ENCODE measurements at regions of chr7 and their contacts with region 1.

Region 1: DNA sequence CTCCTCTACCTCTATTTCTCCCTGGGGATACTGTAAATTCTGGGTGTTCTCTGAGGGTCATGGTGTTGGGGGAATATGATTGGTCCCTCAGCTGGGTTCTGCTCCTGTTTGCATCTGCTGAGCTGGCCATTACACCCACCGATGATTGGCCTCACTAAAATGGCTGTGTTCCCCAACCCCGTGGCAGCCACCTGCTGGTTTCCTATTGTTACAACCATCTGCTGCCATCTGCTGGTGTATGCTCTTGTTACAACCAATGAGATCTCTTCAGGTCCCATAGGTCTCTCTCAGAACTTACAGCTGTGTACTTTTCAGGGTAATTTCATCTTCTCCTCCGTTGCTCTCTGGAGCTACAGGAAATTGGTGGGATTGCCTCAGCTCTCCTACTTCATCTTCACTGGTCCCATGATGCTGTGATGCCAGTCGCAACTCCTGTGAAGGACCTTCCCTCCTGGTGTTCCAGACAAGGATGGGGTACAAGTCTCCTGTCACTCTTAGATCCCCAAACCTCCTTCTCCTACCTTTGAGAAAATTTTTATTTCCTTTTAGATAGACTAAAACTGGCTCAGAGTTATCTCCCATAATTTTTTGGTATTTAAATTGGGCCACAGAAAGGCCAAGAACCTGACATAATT is 303.5 kb upstream of the SMIM30 start:
- DNase-seq: peak; percentile 63
- H3K4me3 Mint-ChIP-seq: no peak overlapping the region
- H3K27ac Mint-ChIP-seq: no peak overlapping the region
- H3K4me1 Mint-ChIP-seq: peaks cover 2% of the 10 kb centered on the region
- H3K27me3 Mint-ChIP-seq: no peaks in the 10 kb centered on the region

Region 2: GRCh38 chr7:112550468-112551060 is 871.2 kb before region 1 on chr7:
- intact Hi-C with region 1: loop called (anchors 1 kb)
- DNase-seq: no peak
- H3K4me3 Mint-ChIP-seq: no peak overlapping the region
- H3K27ac Mint-ChIP-seq: no peak overlapping the region
- H3K4me1 Mint-ChIP-seq: no peaks in the 10 kb centered on the region
- H3K27me3 Mint-ChIP-seq: peaks cover 4% of the 10 kb centered on the region

Region 3: GRCh38 chr7:112898432-112899290 is 523.2 kb before region 1 on chr7:
- intact Hi-C with region 1: loop called (anchors 5 kb)
- DNase-seq: no peak
- H3K4me3 Mint-ChIP-seq: no peak overlapping the region
- H3K27ac Mint-ChIP-seq: no peak overlapping the region
- H3K4me1 Mint-ChIP-seq: no peaks in the 10 kb centered on the region
- H3K27me3 Mint-ChIP-seq: no peaks in the 10 kb centered on the region

Region 4: GRCh38 chr7:113015032-113015645 is 406.7 kb before region 1 on chr7:
- intact Hi-C with region 1: loop called (anchors 5 kb)
- DNase-seq: no peak
- H3K4me3 Mint-ChIP-seq: no peak overlapping the region
- H3K27ac Mint-ChIP-seq: no peak overlapping the region
- H3K4me1 Mint-ChIP-seq: no peaks in the 10 kb centered on the region
- H3K27me3 Mint-ChIP-seq: no peaks in the 10 kb centered on the region

Region 5: DNA sequence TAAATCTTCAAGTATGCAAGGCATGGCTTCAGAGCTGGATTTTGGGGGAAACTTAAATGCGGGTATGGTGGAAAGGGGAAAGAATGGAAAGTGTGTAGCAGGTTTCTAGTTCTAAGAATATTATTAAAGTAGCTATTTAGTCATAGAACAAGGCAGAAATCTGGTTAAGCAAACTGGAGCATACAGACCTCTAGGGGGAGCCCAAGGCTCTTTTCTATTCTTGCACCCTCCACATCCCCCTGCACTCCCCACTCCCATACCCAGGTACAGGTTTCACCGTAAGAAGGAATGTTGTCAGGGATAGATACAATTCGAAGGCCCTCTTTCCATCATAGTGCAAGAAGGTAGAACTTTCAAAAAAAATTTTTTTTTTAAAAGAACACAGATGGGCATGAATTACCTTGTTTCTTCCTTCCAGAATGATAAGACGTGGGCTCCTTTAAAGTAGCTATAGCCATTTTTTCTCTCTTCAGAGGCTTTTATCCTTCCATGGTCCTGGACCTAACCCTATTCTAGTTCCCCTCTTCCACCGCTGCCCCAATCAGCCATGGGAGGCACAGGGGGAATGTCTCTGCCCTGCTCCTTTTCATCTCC is 262.0 kb before region 1 on chr7:
- intact Hi-C with region 1: loop called (anchors 1 kb)
- DNase-seq: no peak
- H3K4me3 Mint-ChIP-seq: no peak overlapping the region
- H3K27ac Mint-ChIP-seq: no peak overlapping the region
- H3K4me1 Mint-ChIP-seq: no peaks in the 10 kb centered on the region
- H3K27me3 Mint-ChIP-seq: peaks cover 5% of the 10 kb centered on the region

Region 6: DNA sequence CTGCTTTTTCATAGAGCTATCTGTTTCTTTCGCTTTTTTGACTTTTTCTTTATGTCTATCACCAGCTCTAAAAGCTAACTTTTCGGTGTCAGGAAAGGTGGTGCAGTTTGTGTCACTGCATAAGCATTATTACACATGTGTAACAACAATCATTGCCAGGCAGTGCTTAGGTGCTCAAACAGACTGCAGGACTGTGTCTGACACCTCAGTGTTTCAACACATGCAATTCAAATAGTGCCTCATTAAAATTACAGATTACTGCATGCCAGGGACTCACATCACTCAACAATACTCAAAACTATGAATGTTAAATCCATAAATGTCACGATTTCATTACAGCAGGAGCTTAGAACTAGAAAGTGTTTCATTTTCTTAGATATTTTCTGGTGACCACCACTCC is 38.2 kb before region 1 on chr7:
- intact Hi-C with region 1: no loop called
- DNase-seq: no peak
- H3K4me3 Mint-ChIP-seq: no peak overlapping the region
- H3K27ac Mint-ChIP-seq: no peak overlapping the region
- H3K4me1 Mint-ChIP-seq: no peaks in the 10 kb centered on the region
- H3K27me3 Mint-ChIP-seq: no peaks in the 10 kb centered on the region

Measured in activated T-helper 2 cell treated with anti-CD3 and anti-CD28 coated beads, Interferon-gamma antibody, Interleukin-2, Interleukin-4, amounts not matched to agents 10 μg/mL and 5 μg/mL and 100 μg/mL, durations not matched to agents 14 hours and 24 hours and 36 hours (primary cell).